ENCODE measurements at regions of chr1 and their contacts with region 1.

Region 1: GRCh38 chr1:116372587-116373444 is at the start of gene ATP1A1:
- DNase-seq: peak; percentile 96 to 97 (median 96)
- H3K4me3 ChIP-seq: peak within 1 kb of the TSS; percentile 82 to 96
- H3K4me3 Mint-ChIP-seq: peak within 1 kb of the TSS; percentile 95 to 99 (median 98)
- H3K27ac ChIP-seq: peak within 1 kb of the TSS; percentile 71
- H3K27ac Mint-ChIP-seq: peak within 1 kb of the TSS; percentile 92 to 99 (median 97)
- H3K4me1 ChIP-seq: peaks cover 49% of the 10 kb centered on the region
- H3K4me1 Mint-ChIP-seq: peaks cover 27 to 55% (median 38%) of the 10 kb centered on the region in 4 donors
- H3K27me3 ChIP-seq: no peaks in the 10 kb centered on the region
- H3K27me3 Mint-ChIP-seq: peaks cover 1% of the 10 kb centered on the region in 2 donors
- total RNA-seq, gene ATP1A1: 251 to 256 TPM

Region 2: DNA sequence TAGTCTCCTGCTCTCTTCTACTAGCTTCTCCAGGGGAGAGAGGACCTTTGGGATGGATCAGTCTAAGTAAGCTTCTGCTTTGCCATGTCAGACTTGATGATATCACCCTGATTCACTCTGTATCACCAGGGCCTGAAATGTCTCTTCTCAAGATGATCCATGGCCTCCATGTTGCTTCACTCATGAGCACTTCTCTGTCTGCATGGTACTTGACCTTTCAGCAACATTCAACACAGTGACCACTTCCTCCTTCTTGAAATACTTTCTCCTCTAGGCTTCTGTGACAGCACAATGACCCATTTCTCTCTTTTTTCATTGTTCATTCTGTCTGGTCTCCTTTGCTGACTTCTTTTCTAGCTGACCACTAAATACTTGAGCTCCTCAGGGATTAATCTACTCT is 999.5 kb before region 1 on chr1:
- CTCF ChIA-PET with region 1: no interaction called
- POLR2A ChIA-PET with region 1: no interaction called
- intact Hi-C with region 1: no loop called
- DNase-seq: no peak
- H3K4me3 ChIP-seq: no peak overlapping the region
- H3K4me3 Mint-ChIP-seq: no peak overlapping the region
- H3K27ac ChIP-seq: no peak overlapping the region
- H3K27ac Mint-ChIP-seq: no peak overlapping the region
- H3K4me1 ChIP-seq: no peaks in the 10 kb centered on the region
- H3K4me1 Mint-ChIP-seq: no peaks in the 10 kb centered on the region
- H3K27me3 ChIP-seq: no peaks in the 10 kb centered on the region
- H3K27me3 Mint-ChIP-seq: no peaks in the 10 kb centered on the region

Region 3: DNA sequence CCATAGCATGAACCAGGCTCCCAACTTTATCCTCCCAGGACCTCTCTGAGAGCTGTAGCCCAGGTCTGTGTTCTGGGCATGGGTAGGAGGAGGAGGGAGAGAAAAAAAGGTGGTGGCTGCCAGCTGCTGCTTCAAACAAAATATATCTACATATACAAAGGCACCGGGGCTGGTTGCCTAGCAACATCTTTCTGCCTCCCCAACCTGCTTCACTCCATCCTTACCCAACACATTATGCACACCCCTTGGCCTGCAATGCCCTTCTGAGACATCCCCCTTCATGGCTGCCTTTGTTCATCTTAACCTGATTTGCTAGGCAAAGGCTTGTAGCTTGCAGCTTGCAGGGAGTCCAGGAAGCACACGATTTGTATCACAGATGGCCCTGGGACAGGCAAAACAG is 27.0 kb before region 1 on chr1:
- CTCF ChIA-PET with region 1: interaction called, 6 read pairs
- POLR2A ChIA-PET with region 1: interaction called, 8 read pairs
- intact Hi-C with region 1: loop called (anchors 1 kb)
- DNase-seq: peak; percentile 74 to 85 (median 83)
- H3K4me3 ChIP-seq: no peak overlapping the region
- H3K4me3 Mint-ChIP-seq: peak overlapping the region; percentile 22 to 74 (median 57)
- H3K27ac ChIP-seq: peak overlapping the region; percentile 48
- H3K27ac Mint-ChIP-seq: peak overlapping the region; percentile 74 to 97 (median 95)
- H3K4me1 ChIP-seq: peaks cover 64% of the 10 kb centered on the region
- H3K4me1 Mint-ChIP-seq: peaks cover 38 to 76% (median 56%) of the 10 kb centered on the region in 4 donors
- H3K27me3 ChIP-seq: no peaks in the 10 kb centered on the region
- H3K27me3 Mint-ChIP-seq: no peaks in the 10 kb centered on the region

Region 4: DNA sequence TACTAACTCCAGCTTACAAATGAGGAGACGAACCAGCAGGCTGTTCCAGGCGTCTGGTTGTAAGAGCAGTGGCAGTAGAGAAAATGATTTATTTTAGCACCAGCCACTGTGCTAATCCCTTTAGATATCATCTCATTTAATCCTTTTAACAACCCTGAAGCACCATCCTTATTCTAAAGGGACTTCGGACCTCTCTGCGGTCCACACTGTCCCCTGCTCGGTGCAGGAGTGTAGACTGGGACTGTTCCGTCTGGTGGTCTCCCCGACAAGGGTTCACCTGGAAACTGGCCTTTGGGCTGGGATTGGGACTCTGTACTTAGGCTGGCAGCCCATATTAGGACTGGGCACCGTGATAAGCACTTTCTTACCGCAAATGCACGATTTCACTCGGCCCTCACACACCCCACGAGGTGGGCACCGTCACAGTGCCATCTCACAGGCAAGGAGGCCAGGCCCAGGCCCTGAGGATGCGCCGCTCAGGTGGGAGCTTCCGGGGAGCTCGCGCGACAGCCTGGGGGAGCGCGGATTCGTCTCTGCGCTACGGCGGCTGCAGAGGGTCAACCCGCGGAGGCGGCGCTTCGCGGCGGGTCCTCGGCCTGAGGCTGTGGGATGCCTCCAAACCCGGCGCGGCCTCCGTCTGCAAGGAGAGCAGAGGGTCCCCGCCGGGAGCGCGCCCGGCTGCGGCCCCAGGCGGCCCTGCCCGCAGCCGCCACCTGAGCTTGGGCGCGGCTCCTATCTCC is 45.4 kb after region 1 on chr1:
- CTCF ChIA-PET with region 1: interaction called, 6 read pairs
- POLR2A ChIA-PET with region 1: interaction called, 90 read pairs
- intact Hi-C with region 1: loop called (anchors 1 kb)
- DNase-seq: peak; percentile 86 to 90 (median 87)
- H3K4me3 ChIP-seq: peak overlapping the region; percentile 90 to 96
- H3K4me3 Mint-ChIP-seq: peak overlapping the region; percentile 84 to 96 (median 91)
- H3K27ac ChIP-seq: peak overlapping the region; percentile 80
- H3K27ac Mint-ChIP-seq: peak overlapping the region; percentile 95 to 98 (median 96)
- H3K4me1 ChIP-seq: peaks cover 32% of the 10 kb centered on the region
- H3K4me1 Mint-ChIP-seq: peaks cover 14 to 52% (median 27%) of the 10 kb centered on the region in 4 donors
- H3K27me3 ChIP-seq: no peaks in the 10 kb centered on the region
- H3K27me3 Mint-ChIP-seq: no peaks in the 10 kb centered on the region

Region 5: DNA sequence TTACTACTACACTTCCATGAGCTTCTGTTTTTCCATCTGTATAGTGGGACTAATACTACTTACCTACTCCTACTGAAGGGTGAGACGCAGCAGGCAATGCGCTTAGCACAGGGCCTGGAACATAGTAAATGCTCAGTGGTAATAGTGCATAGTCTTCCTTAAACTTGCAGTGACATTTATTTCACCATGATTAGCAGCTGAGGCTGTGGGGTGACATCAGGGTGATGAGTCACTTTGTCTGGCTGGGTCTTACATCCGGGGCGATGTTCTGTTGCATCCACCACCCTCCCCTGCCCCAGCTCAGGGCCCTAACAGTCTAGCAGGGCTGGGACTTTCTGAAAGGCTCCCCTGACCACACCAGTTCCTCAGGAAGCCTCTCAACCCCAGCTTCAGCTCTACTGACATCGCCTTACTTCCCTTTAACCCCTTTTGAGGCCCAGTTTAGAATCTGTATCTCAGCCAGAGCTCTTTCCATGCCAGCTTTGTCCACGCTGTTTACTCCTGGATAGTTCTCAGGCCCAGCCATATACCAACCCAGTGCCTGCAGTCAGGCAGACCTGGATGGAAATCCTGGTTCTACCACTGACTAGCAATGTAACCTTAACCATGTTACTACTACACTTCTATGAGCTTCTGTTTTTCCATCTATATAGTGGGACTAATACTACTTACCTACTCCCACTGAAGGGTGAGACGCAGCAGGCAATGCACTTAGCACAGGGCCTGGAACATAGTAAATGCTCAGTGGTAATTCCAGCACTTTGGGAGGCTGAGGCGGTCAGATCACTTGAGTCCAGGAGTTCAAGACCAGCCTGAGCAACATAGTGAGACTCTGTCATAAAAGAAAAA is 131.7 kb after region 1 on chr1:
- CTCF ChIA-PET with region 1: interaction called, 13 read pairs
- POLR2A ChIA-PET with region 1: interaction called, 5 read pairs
- intact Hi-C with region 1: loop called (anchors 2 kb)
- DNase-seq: peak; percentile 85 to 98 (median 89)
- H3K4me3 ChIP-seq: no peak overlapping the region
- H3K4me3 Mint-ChIP-seq: peak overlapping the region in 7 of 8 donors; percentile 17 to 75 (median 67)
- H3K27ac ChIP-seq: peak overlapping the region; percentile 86
- H3K27ac Mint-ChIP-seq: peak overlapping the region; percentile 91 to 98 (median 94)
- H3K4me1 ChIP-seq: peaks cover 78% of the 10 kb centered on the region
- H3K4me1 Mint-ChIP-seq: peaks cover 48 to 86% (median 63%) of the 10 kb centered on the region in 4 donors
- H3K27me3 ChIP-seq: no peaks in the 10 kb centered on the region
- H3K27me3 Mint-ChIP-seq: no peaks in the 10 kb centered on the region

Region 6: GRCh38 chr1:116754198-116754977 is 381.6 kb after region 1 on chr1 and contains the start of gene CD2:
- CTCF ChIA-PET with region 1: no interaction called
- POLR2A ChIA-PET with region 1: no interaction called
- intact Hi-C with region 1: no loop called
- DNase-seq: peak; percentile 66 to 74 (median 71)
- H3K4me3 ChIP-seq: peak within 1 kb of the TSS; percentile 53 to 72
- H3K4me3 Mint-ChIP-seq: peak within 1 kb of the TSS; percentile 96 to 100 (median 98)
- H3K27ac ChIP-seq: peak within 1 kb of the TSS; percentile 88
- H3K27ac Mint-ChIP-seq: peak within 1 kb of the TSS; percentile 96 to 100 (median 99)
- H3K4me1 ChIP-seq: peaks cover 34% of the 10 kb centered on the region
- H3K4me1 Mint-ChIP-seq: peaks cover 25 to 64% (median 33%) of the 10 kb centered on the region in 4 donors
- H3K27me3 ChIP-seq: no peaks in the 10 kb centered on the region
- H3K27me3 Mint-ChIP-seq: no peaks in the 10 kb centered on the region
- total RNA-seq, gene CD2: 305 to 316 TPM

Measured in CD4-positive, alpha-beta memory T cell (primary cell).